ENCODE measurements at regions of chr6 and their contacts with region 1.

Region 1: DNA sequence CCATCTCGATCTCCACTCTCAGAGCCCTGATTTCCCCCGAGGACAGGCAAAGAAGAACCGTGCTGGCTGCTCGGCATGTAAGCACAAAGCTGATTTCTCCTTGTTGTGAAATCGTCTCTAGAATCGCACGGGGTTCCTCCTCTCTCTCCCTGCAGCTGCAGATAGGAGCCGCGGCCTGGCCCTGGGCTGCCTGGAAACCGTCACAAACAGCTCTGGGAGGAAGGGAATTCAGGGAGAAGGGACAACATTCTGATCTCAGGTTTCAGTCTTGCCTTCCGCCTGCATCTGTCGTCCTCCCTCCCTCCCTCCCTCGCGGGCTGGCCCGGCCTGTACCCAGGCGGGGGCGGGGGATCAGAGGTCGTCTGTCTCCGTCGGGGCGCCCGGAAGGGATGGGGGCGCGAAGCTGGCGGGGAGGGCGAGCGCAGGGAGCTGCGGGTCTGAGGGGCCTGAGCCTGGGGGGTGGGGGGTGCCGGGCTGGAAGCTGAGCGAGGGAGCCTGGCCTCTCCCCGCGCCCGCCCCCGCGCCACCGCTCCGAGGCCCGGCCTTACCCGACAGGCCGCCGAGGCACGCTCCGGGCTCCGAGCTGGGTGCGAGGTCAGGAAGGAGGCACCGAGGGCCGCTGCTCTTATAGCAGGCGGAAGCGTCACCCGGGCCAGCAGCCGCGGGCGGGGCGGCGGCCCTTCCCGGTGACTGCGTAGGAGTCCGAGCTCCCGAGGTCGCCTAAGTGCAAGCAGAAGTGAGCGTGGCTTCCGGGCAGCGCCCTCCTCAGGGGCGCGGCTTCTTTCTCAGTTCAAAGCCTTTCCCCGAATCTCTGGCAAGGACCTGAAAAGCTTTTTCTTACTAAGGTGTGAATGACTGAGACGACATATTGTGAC is at the start of gene SERPINB1:
- DNase-seq: peak; percentile 64 to 73 (median 68)
- H3K4me3 ChIP-seq: peak within 1 kb of the TSS; percentile 49 to 58
- H3K4me3 Mint-ChIP-seq: peak within 1 kb of the TSS; percentile 89 to 96 (median 93)
- H3K27ac ChIP-seq: peak within 1 kb of the TSS; percentile 73
- H3K27ac Mint-ChIP-seq: peak within 1 kb of the TSS; percentile 93 to 98 (median 95)
- H3K4me1 ChIP-seq: peaks cover 46% of the 10 kb centered on the region
- H3K4me1 Mint-ChIP-seq: peaks cover 39 to 63% (median 51%) of the 10 kb centered on the region in 4 donors
- H3K27me3 ChIP-seq: no peaks in the 10 kb centered on the region
- H3K27me3 Mint-ChIP-seq: no peaks in the 10 kb centered on the region
- total RNA-seq, gene SERPINB1: 56.7 to 58.0 TPM

Region 2: GRCh38 chr6:1363729-1364572 is 1477.5 kb before region 1 on chr6:
- CTCF ChIA-PET with region 1: no interaction called
- POLR2A ChIA-PET with region 1: no interaction called
- intact Hi-C with region 1: no loop called
- DNase-seq: no peak
- H3K4me3 ChIP-seq: no peak overlapping the region
- H3K4me3 Mint-ChIP-seq: no peak overlapping the region
- H3K27ac ChIP-seq: no peak overlapping the region
- H3K27ac Mint-ChIP-seq: no peak overlapping the region
- H3K4me1 ChIP-seq: no peaks in the 10 kb centered on the region
- H3K4me1 Mint-ChIP-seq: no peaks in the 10 kb centered on the region
- H3K27me3 ChIP-seq: no peaks in the 10 kb centered on the region
- H3K27me3 Mint-ChIP-seq: peaks cover 31 to 46% of the 10 kb centered on the region in 2 donors

Region 3: GRCh38 chr6:2749969-2750600 is 91.4 kb before region 1 on chr6:
- CTCF ChIA-PET with region 1: interaction called, 10 read pairs
- POLR2A ChIA-PET with region 1: no interaction called
- intact Hi-C with region 1: no loop called
- DNase-seq: peak; percentile 52 to 63 (median 56)
- H3K4me3 ChIP-seq: no peak overlapping the region
- H3K4me3 Mint-ChIP-seq: no peak overlapping the region
- H3K27ac ChIP-seq: no peak overlapping the region
- H3K27ac Mint-ChIP-seq: peak overlapping the region in 1 of 7 donors; percentile 35
- H3K4me1 ChIP-seq: no peaks in the 10 kb centered on the region
- H3K4me1 Mint-ChIP-seq: peaks cover 0 to 2% (median under 1%) of the 10 kb centered on the region in 4 donors
- H3K27me3 ChIP-seq: peaks cover 7% of the 10 kb centered on the region
- H3K27me3 Mint-ChIP-seq: peaks cover 13 to 21% of the 10 kb centered on the region in 2 donors

Region 4: GRCh38 chr6:2791124-2791974 is 50.2 kb before region 1 on chr6:
- CTCF ChIA-PET with region 1: interaction called, 32 read pairs
- POLR2A ChIA-PET with region 1: interaction called, 13 read pairs
- intact Hi-C with region 1: loop called (anchors 1 kb)
- DNase-seq: peak; percentile 41 to 57 (median 53)
- H3K4me3 ChIP-seq: no peak overlapping the region
- H3K4me3 Mint-ChIP-seq: peak overlapping the region in 6 of 8 donors; percentile 17 to 61 (median 40)
- H3K27ac ChIP-seq: no peak overlapping the region
- H3K27ac Mint-ChIP-seq: peak overlapping the region; percentile 36 to 83 (median 68)
- H3K4me1 ChIP-seq: peaks cover 26% of the 10 kb centered on the region
- H3K4me1 Mint-ChIP-seq: peaks cover 22 to 35% (median 26%) of the 10 kb centered on the region in 4 donors
- H3K27me3 ChIP-seq: no peaks in the 10 kb centered on the region
- H3K27me3 Mint-ChIP-seq: no peaks in the 10 kb centered on the region

Region 5: GRCh38 chr6:2853761-2854395 is 12.4 kb after region 1 on chr6:
- CTCF ChIA-PET with region 1: interaction called, 68 read pairs
- POLR2A ChIA-PET with region 1: interaction called, 91 read pairs
- intact Hi-C with region 1: no loop called
- DNase-seq: peak; percentile 35 to 94 (median 40)
- H3K4me3 ChIP-seq: peak overlapping the region; percentile 39 to 42
- H3K4me3 Mint-ChIP-seq: peak overlapping the region; percentile 71 to 95 (median 81)
- H3K27ac ChIP-seq: peak overlapping the region; percentile 92
- H3K27ac Mint-ChIP-seq: peak overlapping the region; percentile 87 to 100 (median 95)
- H3K4me1 ChIP-seq: peaks cover 70% of the 10 kb centered on the region
- H3K4me1 Mint-ChIP-seq: peaks cover 48 to 75% (median 62%) of the 10 kb centered on the region in 4 donors
- H3K27me3 ChIP-seq: no peaks in the 10 kb centered on the region
- H3K27me3 Mint-ChIP-seq: no peaks in the 10 kb centered on the region

Region 6: GRCh38 chr6:2900821-2901644 is 59.5 kb after region 1 on chr6:
- CTCF ChIA-PET with region 1: interaction called, 135 read pairs
- POLR2A ChIA-PET with region 1: interaction called, 33 read pairs
- intact Hi-C with region 1: loop called (anchors 2 kb)
- DNase-seq: peak in 1 of 5 donors; percentile 22
- H3K4me3 ChIP-seq: peak overlapping the region; percentile 42 to 92
- H3K4me3 Mint-ChIP-seq: peak overlapping the region; percentile 99 to 100 (median 99)
- H3K27ac ChIP-seq: peak overlapping the region; percentile 82
- H3K27ac Mint-ChIP-seq: peak overlapping the region; percentile 91 to 99 (median 98)
- H3K4me1 ChIP-seq: peaks cover 57% of the 10 kb centered on the region
- H3K4me1 Mint-ChIP-seq: peaks cover 44 to 66% (median 54%) of the 10 kb centered on the region in 4 donors
- H3K27me3 ChIP-seq: no peaks in the 10 kb centered on the region
- H3K27me3 Mint-ChIP-seq: no peaks in the 10 kb centered on the region

Region 7: DNA sequence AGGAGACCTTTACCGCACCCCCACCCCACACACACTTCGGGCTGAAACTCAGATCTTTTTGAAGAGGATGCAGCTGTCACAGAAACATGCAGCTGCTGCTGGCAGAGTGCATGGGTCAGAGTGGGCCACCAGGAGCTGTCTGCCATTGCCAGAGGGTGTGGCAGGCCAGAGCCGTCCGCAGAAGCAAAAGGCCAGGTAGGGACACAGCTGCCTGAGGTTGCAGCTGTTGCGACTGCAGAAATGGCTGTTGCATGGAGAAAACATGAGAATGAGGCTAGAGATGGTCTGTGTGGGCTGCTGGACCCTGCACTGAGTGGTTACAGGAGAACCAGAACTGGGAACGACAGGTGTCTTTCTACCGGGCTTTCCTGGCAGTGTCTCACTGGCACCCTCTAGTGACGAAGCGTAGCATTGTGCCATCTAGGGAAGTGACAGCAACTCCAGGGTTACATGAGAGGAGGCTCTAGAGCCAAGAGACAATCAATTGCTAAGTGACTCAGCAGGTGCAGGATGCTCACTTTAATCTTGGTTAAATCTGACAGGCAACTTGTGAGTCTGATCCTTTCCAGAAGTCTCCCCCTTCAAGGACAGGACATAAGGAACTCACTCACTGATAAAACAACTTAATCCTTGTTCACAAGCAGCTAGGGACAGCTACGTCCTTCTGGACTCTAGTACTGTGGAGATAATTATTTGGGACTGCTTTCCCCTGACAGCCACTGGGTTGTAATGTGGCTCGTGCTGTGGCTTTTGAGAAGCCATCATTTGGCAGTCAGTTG is 90.7 kb after region 1 on chr6:
- CTCF ChIA-PET with region 1: interaction called, 186 read pairs
- POLR2A ChIA-PET with region 1: interaction called, 27 read pairs
- intact Hi-C with region 1: loop called (anchors 1 kb)
- DNase-seq: peak; percentile 79 to 87 (median 81)
- H3K4me3 ChIP-seq: no peak overlapping the region
- H3K4me3 Mint-ChIP-seq: peak overlapping the region in 3 of 8 donors; percentile 33 to 53 (median 41)
- H3K27ac ChIP-seq: no peak overlapping the region
- H3K27ac Mint-ChIP-seq: peak overlapping the region in 4 of 7 donors; percentile 4 to 60 (median 41)
- H3K4me1 ChIP-seq: peaks cover 21% of the 10 kb centered on the region
- H3K4me1 Mint-ChIP-seq: peaks cover 18 to 23% (median 22%) of the 10 kb centered on the region in 4 donors
- H3K27me3 ChIP-seq: no peaks in the 10 kb centered on the region
- H3K27me3 Mint-ChIP-seq: no peaks in the 10 kb centered on the region

Region 8: DNA sequence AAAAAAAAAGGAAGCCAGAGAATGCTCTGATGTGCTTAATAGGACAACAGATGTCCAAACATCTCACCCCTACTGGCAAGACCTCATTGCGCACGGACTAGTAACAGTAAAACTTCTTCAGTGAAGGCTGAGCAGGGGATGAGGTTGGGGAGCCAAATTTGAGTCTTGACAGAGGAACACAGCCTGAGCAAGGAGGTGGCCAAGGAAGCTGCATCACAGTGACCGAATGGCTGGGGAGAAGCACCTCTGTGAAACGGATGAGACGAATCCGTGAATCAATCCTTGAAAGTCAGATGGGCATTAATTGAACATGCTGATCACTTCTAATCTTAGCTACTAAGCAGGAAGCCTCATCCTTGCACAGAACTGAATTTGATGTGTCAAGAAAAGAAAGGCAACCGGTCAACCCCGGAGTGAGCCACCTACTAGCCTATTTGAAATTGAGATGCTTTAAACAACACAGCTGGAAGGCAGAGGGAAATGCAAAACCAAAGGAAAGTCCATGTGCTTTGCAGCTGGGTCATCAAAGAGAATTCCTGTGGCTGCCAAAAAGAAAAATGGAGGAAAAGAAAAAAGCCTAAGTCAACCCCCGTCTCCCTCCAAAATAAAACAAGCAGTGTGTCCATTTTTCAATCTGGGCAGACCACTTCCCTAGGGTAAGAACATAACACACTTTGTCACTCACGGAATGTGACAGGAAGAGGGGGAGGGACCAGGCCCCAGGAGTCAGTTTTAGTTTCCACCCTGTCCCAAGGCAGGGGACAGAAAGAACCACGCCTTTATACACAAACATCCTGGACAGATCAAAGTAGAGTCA is 880.5 kb after region 1 on chr6:
- CTCF ChIA-PET with region 1: no interaction called
- POLR2A ChIA-PET with region 1: no interaction called
- intact Hi-C with region 1: no loop called
- DNase-seq: no peak
- H3K4me3 ChIP-seq: no peak overlapping the region
- H3K4me3 Mint-ChIP-seq: no peak overlapping the region
- H3K27ac ChIP-seq: no peak overlapping the region
- H3K27ac Mint-ChIP-seq: peak overlapping the region in 1 of 7 donors; percentile 53
- H3K4me1 ChIP-seq: no peaks in the 10 kb centered on the region
- H3K4me1 Mint-ChIP-seq: peaks cover 0 to 2% (median 0%) of the 10 kb centered on the region in 4 donors
- H3K27me3 ChIP-seq: no peaks in the 10 kb centered on the region
- H3K27me3 Mint-ChIP-seq: peaks cover 0 to 3% of the 10 kb centered on the region in 2 donors